HCT116 (cell line): ENCODE measurements at regions of chr3 and their contacts with region 1.

Region 1: GRCh38 chr3:138594150-138594934 is at the start of gene CEP70:
- DNase-seq: peak; percentile 90
- ATAC-seq: peak; percentile 95
- H3K4me3 ChIP-seq: peak within 1 kb of the TSS; percentile 76 to 77
- H3K27ac ChIP-seq: peak within 1 kb of the TSS; percentile 84
- H3K4me1 ChIP-seq: peaks cover 5 to 13% of the 10 kb centered on the region in 2 experiments
- H3K27me3 ChIP-seq: no peaks in the 10 kb centered on the region
- CTCF ChIP-seq: peak; percentile 69 to 91 (median 89)
- POLR2A ChIP-seq: peak; percentile 82
- RAD21 ChIP-seq: peak; percentile 90
- total RNA-seq, gene CEP70: 38.7 TPM

Region 2: DNA sequence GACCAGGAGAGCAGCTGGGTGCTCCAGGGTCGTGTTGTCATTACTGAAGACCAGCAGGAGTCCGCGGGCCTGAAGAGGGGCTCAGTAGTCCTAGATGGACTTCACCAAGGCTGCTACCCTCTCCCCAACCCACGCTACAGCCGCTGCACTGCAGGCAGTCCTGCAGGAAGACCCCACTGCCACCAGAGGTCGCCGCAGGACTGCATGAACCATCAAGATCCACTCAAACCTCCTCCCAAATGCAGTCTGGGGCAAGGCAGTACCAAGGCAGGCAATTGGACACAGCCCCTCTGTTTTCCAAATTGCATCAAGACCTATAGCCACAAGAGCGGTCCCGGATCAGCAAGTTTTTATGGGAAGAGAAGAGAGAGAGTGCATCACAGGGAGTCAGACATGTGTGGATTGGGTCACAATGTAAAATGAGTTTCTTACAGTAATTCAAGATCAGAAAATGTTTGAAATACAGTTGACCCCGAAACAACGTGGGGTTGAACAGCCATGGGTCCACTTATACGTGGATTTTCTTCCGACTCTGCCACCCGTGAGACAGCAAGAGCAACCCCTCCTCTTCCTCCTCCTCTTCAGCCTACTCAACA is 525.7 kb before region 1 on chr3:
- CTCF ChIA-PET with region 1: no interaction called
- POLR2A ChIA-PET with region 1: no interaction called
- RAD21 ChIA-PET with region 1: no interaction called
- intact Hi-C with region 1: loop called (anchors 2 kb)
- DNase-seq: peak; percentile 63
- ATAC-seq: peak; percentile 98
- H3K4me3 ChIP-seq: no peak overlapping the region
- H3K27ac ChIP-seq: no peak overlapping the region
- H3K4me1 ChIP-seq: peaks cover 0 to 10% of the 10 kb centered on the region in 2 experiments; a peak in 2 of 4 replicates
- H3K27me3 ChIP-seq: no peaks in the 10 kb centered on the region
- CTCF ChIP-seq: peak; percentile 90 to 99 (median 99)
- POLR2A ChIP-seq: no peak
- RAD21 ChIP-seq: peak; percentile 99

Region 3: GRCh38 chr3:138608322-138609135 is 14.2 kb after region 1 on chr3 and contains the start of gene FAIM:
- CTCF ChIA-PET with region 1: interaction called, 13 read pairs
- POLR2A ChIA-PET with region 1: interaction called, 4 read pairs
- RAD21 ChIA-PET with region 1: no interaction called
- intact Hi-C with region 1: no loop called
- DNase-seq: peak; percentile 46
- ATAC-seq: peak; percentile 87
- H3K4me3 ChIP-seq: peak within 1 kb of the TSS; percentile 60 to 71
- H3K27ac ChIP-seq: peak within 1 kb of the TSS; percentile 89
- H3K4me1 ChIP-seq: peaks cover 7 to 25% of the 10 kb centered on the region in 2 experiments
- H3K27me3 ChIP-seq: no peaks in the 10 kb centered on the region
- CTCF ChIP-seq: no peak
- POLR2A ChIP-seq: no peak
- RAD21 ChIP-seq: no peak
- total RNA-seq, gene FAIM: 12.2 TPM

Region 4: GRCh38 chr3:138935848-138936740 is 341.8 kb after region 1 on chr3:
- CTCF ChIA-PET with region 1: interaction called, 14 read pairs
- POLR2A ChIA-PET with region 1: interaction called, 7 read pairs
- RAD21 ChIA-PET with region 1: interaction called in 1 of 2 experiments, 5 read pairs
- intact Hi-C with region 1: no loop called
- DNase-seq: peak; percentile 52
- ATAC-seq: peak; percentile 88
- H3K4me3 ChIP-seq: peak overlapping the region; percentile 43 to 68
- H3K27ac ChIP-seq: peak overlapping the region; percentile 21
- H3K4me1 ChIP-seq: peaks cover 6 to 18% of the 10 kb centered on the region in 2 experiments; a peak in 3 of 4 replicates
- H3K27me3 ChIP-seq: no peaks in the 10 kb centered on the region
- CTCF ChIP-seq: peak; percentile 70 to 91 (median 76)
- POLR2A ChIP-seq: no peak
- RAD21 ChIP-seq: peak; percentile 61

Region 5: DNA sequence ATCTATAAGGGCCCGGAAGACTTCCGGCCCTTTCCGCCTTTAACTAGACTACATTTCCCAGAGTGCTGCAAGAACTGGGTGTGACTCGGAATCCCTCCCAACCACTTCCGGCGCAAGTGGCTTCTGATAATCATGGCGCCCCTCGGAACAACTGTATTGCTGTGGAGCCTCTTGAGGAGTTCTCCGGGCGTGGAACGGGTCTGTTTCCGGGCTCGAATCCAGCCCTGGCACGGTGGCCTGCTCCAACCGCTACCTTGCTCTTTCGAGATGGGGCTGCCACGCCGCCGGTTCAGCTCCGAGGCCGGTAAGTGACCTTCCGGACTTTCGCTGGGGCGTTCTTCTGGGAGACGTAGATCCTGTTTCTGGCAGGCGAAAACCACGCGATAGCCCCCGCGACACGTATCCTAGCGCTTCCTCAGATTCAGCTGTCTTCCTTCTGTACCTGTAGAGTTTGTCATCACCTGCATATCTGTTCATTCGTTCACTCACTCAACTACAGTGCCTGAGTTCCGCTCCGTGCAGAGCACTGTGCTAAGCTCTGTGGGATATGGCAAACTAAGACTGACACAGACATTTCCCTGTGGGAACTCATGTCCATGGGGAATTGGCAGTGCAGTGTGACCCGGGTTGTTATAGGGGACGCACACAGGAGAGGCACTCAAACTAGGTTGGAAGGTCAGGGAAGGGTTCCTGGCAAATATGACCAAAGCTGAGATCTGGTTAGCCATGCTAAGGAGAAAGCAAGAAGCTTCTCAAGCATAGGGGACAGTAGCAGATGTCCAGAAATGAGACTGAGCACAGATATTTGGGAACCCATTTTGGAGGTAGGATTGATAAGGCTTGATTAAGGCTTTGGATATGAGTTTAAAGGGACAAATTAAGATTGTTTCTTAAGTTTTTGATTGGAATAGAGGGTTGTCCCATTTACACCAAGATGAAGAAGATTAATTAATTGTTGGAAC is 749.8 kb after region 1 on chr3 and contains the start of gene MRPS22:
- CTCF ChIA-PET with region 1: no interaction called
- POLR2A ChIA-PET with region 1: no interaction called
- RAD21 ChIA-PET with region 1: no interaction called
- intact Hi-C with region 1: loop called (anchors 10 kb)
- DNase-seq: peak; percentile 88
- ATAC-seq: peak; percentile 92
- H3K4me3 ChIP-seq: peak within 1 kb of the TSS; percentile 79 to 96
- H3K27ac ChIP-seq: peak within 1 kb of the TSS; percentile 67
- H3K4me1 ChIP-seq: peaks cover 12 to 30% of the 10 kb centered on the region in 2 experiments; a peak in 3 of 4 replicates
- H3K27me3 ChIP-seq: no peaks in the 10 kb centered on the region
- CTCF ChIP-seq: no peak
- POLR2A ChIP-seq: no peak
- RAD21 ChIP-seq: no peak
- total RNA-seq, gene MRPS22: 95.1 TPM